Caco-2 (cell line): ENCODE measurements at regions of chr5 and their contacts with region 1.

Region 1: DNA sequence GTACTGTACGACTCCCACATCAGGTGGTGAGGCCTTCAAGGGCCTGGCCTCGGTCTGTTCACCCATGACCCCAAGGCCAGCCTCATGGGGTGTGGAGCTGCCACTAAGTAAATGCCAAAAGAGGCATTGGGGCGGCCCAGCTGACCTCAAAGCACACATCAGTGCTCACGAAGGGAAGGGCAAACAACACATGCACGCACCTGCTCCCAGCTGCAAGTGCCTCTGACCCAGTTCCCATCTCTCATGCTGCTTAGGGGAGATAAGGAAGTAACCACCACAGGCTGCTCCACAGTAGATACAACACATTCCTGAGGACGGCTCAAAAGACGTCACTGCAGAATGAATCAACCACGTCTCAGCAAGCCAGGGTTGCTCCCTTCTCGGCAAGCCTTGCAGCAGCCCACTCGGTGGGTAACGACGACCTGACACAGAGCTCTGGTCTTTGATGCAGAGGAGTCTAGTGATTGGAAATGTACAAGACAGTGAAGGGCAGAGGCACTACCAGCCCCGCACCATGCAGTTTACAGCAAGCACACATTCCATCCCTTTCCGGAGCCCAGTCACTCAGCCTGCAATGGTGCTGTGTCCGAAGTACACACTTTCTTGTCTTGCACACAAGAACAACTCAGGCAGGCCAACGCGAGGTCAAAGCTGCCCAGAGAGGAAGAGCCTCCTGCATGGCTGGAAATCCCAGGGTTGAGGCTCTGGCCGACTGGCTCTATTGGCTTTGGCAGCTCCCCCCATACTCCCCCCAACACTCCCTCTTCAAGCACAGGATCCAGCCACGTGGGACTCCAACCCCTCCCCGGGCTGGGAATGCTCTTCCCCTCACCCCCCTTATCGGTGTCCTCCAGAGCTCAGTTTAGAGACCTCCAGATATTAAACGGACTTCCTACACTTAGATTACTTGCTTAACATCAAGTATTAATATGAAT is 31.8 kb downstream of the FABP6 start:
- DNase-seq: peak; percentile 88 to 97
- H3K4me3 ChIP-seq: peak overlapping the region; percentile 0; the same call in 1 of the 2 replicates
- H3K4me3 Mint-ChIP-seq: peak overlapping the region; percentile 73
- H3K27ac Mint-ChIP-seq: peak overlapping the region; percentile 100
- H3K4me1 ChIP-seq: peaks cover 45% of the 10 kb centered on the region
- H3K4me1 Mint-ChIP-seq: peaks cover 57% of the 10 kb centered on the region
- H3K27me3 ChIP-seq: no peaks in the 10 kb centered on the region
- H3K27me3 Mint-ChIP-seq: no peaks in the 10 kb centered on the region
- CTCF ChIP-seq: no peak

Region 2: GRCh38 chr5:160119142-160119904 is 141.8 kb before region 1 on chr5 and contains the start of gene PWWP2A:
- CTCF ChIA-PET with region 1: no interaction called
- POLR2A ChIA-PET with region 1: no interaction called
- intact Hi-C with region 1: loop called (anchors 2 kb)
- DNase-seq: peak; percentile 98 to 99
- H3K4me3 ChIP-seq: peak within 1 kb of the TSS; percentile 91
- H3K4me3 Mint-ChIP-seq: peak within 1 kb of the TSS; percentile 93
- H3K27ac Mint-ChIP-seq: peak within 1 kb of the TSS; percentile 93
- H3K4me1 ChIP-seq: peaks cover 7% of the 10 kb centered on the region; the same call in 1 of the 2 replicates
- H3K4me1 Mint-ChIP-seq: peaks cover 10% of the 10 kb centered on the region
- H3K27me3 ChIP-seq: no peaks in the 10 kb centered on the region
- H3K27me3 Mint-ChIP-seq: no peaks in the 10 kb centered on the region
- CTCF ChIP-seq: peak in 1 of 2 experiments; percentile 9
- total RNA-seq, gene PWWP2A: 34.4 and 36.7 TPM in 2 replicates

Region 3: DNA sequence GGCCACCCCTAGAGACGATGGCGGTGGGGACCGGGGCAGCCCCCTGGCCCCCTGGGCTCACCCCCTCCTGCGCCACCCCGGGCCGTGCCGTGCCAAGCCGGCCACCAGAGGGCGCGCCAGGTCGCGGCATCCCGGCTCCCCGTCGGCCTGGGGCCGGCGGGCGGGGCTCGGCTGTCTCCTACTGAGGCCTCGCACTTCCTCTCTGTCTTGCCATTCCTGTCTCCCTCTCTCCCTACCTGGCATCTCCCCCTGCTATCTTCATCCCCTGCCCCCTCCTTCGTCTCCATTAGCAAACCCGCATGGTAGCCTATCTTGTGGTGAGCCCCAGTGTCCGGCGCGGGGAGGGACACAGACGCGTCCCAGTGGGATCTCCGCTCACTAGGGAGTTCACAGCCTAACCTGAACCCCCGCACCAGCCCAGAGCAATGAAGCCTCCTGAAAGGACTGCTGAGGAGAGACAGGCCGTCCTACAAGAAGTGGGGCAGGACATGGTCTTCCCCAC is 61.7 kb before region 1 on chr5:
- CTCF ChIA-PET with region 1: no interaction called
- POLR2A ChIA-PET with region 1: no interaction called
- intact Hi-C with region 1: loop called (anchors 1 kb)
- DNase-seq: peak; percentile 62 to 90
- H3K4me3 ChIP-seq: peak overlapping the region; percentile 37
- H3K4me3 Mint-ChIP-seq: peak overlapping the region; percentile 78
- H3K27ac Mint-ChIP-seq: peak overlapping the region; percentile 75
- H3K4me1 ChIP-seq: peaks cover 21% of the 10 kb centered on the region
- H3K4me1 Mint-ChIP-seq: peaks cover 19% of the 10 kb centered on the region
- H3K27me3 ChIP-seq: no peaks in the 10 kb centered on the region
- H3K27me3 Mint-ChIP-seq: no peaks in the 10 kb centered on the region
- CTCF ChIP-seq: peak; percentile 63 to 94

Region 4: GRCh38 chr5:160245506-160246086 is 15.6 kb before region 1 on chr5:
- CTCF ChIA-PET with region 1: interaction called, 4 read pairs
- POLR2A ChIA-PET with region 1: interaction called, 5 read pairs
- intact Hi-C with region 1: loop called (anchors 2 kb)
- DNase-seq: no peak
- H3K4me3 ChIP-seq: no peak overlapping the region
- H3K4me3 Mint-ChIP-seq: no peak overlapping the region
- H3K27ac Mint-ChIP-seq: no peak overlapping the region
- H3K4me1 ChIP-seq: peaks cover 14% of the 10 kb centered on the region; the same call in 1 of the 2 replicates
- H3K4me1 Mint-ChIP-seq: peaks cover 10% of the 10 kb centered on the region
- H3K27me3 ChIP-seq: no peaks in the 10 kb centered on the region
- H3K27me3 Mint-ChIP-seq: no peaks in the 10 kb centered on the region
- CTCF ChIP-seq: no peak

Region 5: DNA sequence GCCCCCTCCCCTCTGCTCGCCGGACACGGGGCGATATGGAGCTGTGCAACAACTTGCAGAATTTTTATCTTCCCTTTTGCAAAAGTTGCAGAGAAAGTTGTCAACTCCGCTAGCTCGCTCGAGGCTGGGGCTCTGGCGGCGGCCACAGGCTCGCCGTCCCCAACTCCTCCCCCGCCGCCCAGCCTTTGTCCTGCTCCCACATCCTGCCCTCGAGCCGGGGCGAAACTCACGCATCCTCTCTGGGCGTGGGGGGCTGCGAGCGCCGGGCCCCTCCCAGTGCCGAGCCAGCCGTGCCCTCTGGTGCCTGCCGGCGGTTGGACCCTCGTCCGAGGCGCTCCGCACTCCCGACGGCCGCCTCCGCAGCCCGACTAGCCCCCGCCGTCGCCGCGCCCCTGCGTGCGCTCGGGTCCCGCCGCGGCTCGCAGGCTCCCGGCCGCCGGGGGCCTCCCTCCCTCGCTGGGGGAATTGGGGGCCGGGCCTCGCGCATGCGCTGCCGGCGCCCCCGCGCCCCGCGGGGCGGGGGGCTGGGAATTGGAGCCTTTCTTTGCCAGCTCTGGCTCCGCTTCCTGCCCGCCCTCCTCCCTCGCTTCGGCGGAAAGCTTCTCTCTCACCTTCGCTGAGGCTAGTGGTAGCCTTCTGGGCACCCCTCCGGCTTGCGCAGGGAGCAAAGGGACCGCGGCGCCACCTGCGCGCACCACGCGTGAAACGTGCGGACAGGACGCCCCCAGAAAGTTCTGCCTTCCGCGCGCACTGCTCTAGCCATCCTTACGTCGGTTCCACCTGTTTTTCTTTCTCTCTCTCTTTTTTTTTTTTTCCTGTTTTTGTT is 51.2 kb after region 1 on chr5 and contains the start of gene CCNJL:
- CTCF ChIA-PET with region 1: no interaction called
- POLR2A ChIA-PET with region 1: interaction called, 3 read pairs
- intact Hi-C with region 1: loop called (anchors 2 kb)
- DNase-seq: peak; percentile 79 to 86
- H3K4me3 ChIP-seq: peak within 1 kb of the TSS; percentile 63
- H3K4me3 Mint-ChIP-seq: peak within 1 kb of the TSS; percentile 92
- H3K27ac Mint-ChIP-seq: peak within 1 kb of the TSS; percentile 92
- H3K4me1 ChIP-seq: peaks cover 34% of the 10 kb centered on the region
- H3K4me1 Mint-ChIP-seq: peaks cover 50% of the 10 kb centered on the region
- H3K27me3 ChIP-seq: no peaks in the 10 kb centered on the region
- H3K27me3 Mint-ChIP-seq: no peaks in the 10 kb centered on the region
- CTCF ChIP-seq: no peak
- total RNA-seq, gene CCNJL: 16.5 and 17.4 TPM in 2 replicates